B cell (primary cell): ENCODE measurements at regions of chr6 and their contacts with region 1.

Region 1: DNA sequence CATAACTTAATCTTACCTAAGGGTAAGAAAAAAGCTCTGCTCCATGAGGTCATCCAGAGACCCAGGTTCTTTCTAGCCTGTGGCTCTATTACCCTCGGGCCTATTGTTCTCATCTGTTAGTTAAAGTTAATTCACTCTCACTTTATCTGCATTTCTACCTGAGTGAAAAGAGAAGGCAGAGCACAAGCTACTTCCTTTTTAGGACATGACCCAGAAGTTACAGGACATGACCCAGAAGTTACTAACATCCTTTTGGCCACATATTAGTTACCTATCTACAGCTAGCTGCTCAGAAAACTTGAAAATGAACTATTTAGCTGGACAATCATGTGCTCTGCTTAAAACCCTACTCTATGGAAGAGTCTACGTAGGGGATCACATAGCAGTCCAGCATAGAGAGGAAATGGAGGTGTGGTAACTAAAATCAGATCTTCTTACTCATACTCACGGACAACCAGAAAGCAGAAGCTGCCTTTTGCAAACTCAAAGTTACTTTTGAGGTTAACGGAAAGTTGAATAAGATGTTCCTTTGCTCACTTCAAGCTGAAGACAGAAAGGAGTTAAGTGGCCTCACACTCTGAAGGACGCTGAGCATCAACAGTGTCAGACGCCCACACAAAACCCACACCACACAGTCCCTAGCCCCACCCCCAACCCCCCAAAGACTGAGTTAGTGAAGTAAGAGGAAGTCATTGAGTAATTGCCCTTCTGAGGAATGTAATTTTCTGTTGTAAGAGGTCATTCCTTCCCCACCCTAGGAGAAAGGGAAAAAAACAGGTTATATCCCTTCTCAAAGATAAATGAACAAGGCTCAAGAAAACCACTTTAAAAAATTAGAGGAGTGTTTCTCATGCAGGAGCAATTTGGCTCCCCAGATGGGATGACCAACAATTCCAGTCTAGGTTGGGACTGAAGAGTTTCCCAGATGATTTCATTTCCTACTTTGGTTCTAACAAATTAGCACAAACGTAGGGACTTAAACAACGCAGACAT is 45.9 kb upstream of the TAB2 start:
- DNase-seq: peak; percentile 72
- ATAC-seq: peak; percentile 86
- H3K4me3 ChIP-seq: peak overlapping the region in 4 of 5 experiments; percentile 19 to 42 (median 36)
- H3K4me3 Mint-ChIP-seq: peak overlapping the region; percentile 81
- H3K27ac ChIP-seq: peak overlapping the region; percentile 81 to 84
- H3K27ac Mint-ChIP-seq: peak overlapping the region; percentile 99
- H3K4me1 ChIP-seq: peaks cover 54 to 59% of the 10 kb centered on the region in 2 donors
- H3K4me1 Mint-ChIP-seq: peaks cover 58% of the 10 kb centered on the region
- H3K27me3 ChIP-seq: no peaks in the 10 kb centered on the region
- H3K27me3 Mint-ChIP-seq: no peaks in the 10 kb centered on the region
- CTCF ChIP-seq: no peak

Region 2: DNA sequence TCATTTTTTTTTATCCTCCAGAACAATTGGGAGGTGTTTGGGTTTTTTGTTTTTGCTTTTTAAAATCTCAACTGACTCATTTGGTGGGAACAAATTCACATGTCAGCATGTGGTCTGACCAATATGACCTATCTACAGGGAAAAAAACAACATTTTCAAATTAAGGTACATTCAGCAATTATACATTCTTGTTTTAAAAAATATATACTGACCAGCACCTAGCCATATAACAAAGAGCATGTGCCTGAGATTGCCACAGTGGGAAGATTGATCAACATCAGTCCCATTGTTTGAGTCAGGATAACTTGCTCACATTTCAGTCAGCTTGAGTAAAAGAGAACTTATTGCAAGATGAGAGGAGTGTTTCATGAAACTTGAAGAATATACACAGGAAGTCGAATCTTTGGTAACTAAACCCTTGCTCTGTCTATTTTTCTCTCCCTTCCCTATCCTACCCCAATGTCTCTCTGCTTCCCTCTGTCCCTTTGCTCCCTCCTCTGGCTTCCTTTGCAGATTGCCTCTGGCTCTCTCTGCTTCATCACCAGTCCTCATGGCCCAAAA is 117.3 kb before region 1 on chr6:
- CTCF ChIA-PET with region 1: no interaction called
- POLR2A ChIA-PET with region 1: no interaction called
- intact Hi-C with region 1: no loop called
- DNase-seq: no peak
- ATAC-seq: no peak
- H3K4me3 ChIP-seq: no peak overlapping the region
- H3K4me3 Mint-ChIP-seq: no peak overlapping the region
- H3K27ac ChIP-seq: no peak overlapping the region
- H3K27ac Mint-ChIP-seq: no peak overlapping the region
- H3K4me1 ChIP-seq: no peaks in the 10 kb centered on the region
- H3K4me1 Mint-ChIP-seq: peaks cover 5% of the 10 kb centered on the region
- H3K27me3 ChIP-seq: no peaks in the 10 kb centered on the region
- H3K27me3 Mint-ChIP-seq: no peaks in the 10 kb centered on the region
- CTCF ChIP-seq: no peak

Region 3: GRCh38 chr6:149190224-149190831 is 81.3 kb before region 1 on chr6:
- CTCF ChIA-PET with region 1: interaction called, 11 read pairs
- POLR2A ChIA-PET with region 1: no interaction called
- intact Hi-C with region 1: no loop called
- DNase-seq: peak; percentile 77
- ATAC-seq: peak; percentile 75
- H3K4me3 ChIP-seq: no peak overlapping the region
- H3K4me3 Mint-ChIP-seq: no peak overlapping the region
- H3K27ac ChIP-seq: no peak overlapping the region
- H3K27ac Mint-ChIP-seq: no peak overlapping the region
- H3K4me1 ChIP-seq: peaks cover 0 to 8% of the 10 kb centered on the region in 2 donors
- H3K4me1 Mint-ChIP-seq: peaks cover 10% of the 10 kb centered on the region
- H3K27me3 ChIP-seq: peaks cover 0 to 3% (median 0%) of the 10 kb centered on the region in 4 experiments
- H3K27me3 Mint-ChIP-seq: no peaks in the 10 kb centered on the region
- CTCF ChIP-seq: peak; percentile 77

Region 4: DNA sequence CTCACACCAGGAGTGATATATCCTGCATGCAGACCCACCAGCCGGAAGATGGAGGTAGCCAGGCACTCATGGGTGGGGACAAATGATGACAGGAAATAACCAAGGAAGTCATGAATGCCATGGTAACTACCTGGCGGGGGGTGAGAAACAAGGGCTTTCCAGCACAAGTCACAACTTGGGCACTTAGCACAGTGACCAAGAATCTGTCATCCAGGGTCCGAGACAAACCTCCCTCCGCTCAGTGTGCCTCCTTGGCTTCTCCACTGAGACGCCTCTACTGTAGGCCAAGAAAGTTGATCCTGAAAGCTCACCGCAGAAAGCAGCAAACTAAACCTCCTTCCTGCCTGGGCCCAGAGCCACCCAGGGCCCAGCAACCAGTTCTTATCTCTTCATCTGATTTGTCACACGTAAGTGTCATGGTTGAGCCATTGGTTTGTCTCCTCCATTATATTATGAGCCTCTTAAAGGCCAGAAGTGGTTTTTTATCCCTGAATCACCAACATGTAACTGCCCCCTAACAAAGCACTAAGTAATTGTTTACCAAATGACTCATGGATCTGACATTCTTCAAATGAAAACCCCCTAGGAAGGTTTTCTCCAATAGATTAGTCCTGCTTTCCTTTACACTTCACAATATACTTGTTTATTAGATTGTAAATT is 38.5 kb before region 1 on chr6:
- CTCF ChIA-PET with region 1: interaction called, 4 read pairs
- POLR2A ChIA-PET with region 1: no interaction called
- intact Hi-C with region 1: loop called (anchors 5 kb)
- DNase-seq: no peak
- ATAC-seq: no peak
- H3K4me3 ChIP-seq: no peak overlapping the region
- H3K4me3 Mint-ChIP-seq: no peak overlapping the region
- H3K27ac ChIP-seq: no peak overlapping the region
- H3K27ac Mint-ChIP-seq: no peak overlapping the region
- H3K4me1 ChIP-seq: peaks cover 27 to 41% of the 10 kb centered on the region in 2 donors
- H3K4me1 Mint-ChIP-seq: peaks cover 53% of the 10 kb centered on the region
- H3K27me3 ChIP-seq: no peaks in the 10 kb centered on the region
- H3K27me3 Mint-ChIP-seq: no peaks in the 10 kb centered on the region
- CTCF ChIP-seq: no peak

Region 5: DNA sequence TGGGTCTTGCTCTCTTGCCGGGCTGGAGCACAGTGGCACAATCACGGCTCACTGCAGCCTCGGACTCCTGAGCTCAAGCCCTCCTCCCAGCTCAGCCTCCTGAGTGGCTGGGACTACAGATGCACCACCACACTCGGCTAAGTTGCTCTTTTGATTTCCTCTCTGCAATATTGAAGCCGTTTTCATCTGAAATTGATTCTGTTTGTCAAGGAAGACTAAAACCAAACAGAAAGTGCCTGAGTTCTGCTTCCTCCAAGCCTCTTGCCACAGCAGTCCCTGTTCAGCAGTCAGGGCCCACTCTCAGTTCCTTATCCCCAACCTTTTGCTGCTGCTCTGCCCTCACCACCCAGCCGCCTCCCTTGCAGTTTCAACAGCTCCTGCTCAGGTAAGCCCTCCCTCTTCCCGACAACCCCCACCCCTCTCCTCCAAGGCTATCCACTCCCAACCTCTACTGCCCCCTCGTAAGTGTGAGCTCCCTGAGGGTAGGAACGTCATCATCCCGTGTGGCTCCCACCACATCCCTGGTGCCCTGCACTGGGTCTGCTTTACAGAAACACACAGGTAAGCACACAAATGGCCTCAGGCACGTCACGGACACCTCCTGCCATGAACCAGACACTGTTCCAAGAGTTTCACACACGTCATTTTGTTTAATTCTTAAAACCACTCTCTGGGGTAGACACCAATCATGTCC is 24.8 kb before region 1 on chr6:
- CTCF ChIA-PET with region 1: interaction called, 3 read pairs
- POLR2A ChIA-PET with region 1: interaction called, 3 read pairs
- intact Hi-C with region 1: loop called (anchors 2 kb)
- DNase-seq: peak; percentile 76
- ATAC-seq: peak; percentile 97
- H3K4me3 ChIP-seq: peak overlapping the region in 4 of 5 experiments; percentile 4 to 64 (median 42)
- H3K4me3 Mint-ChIP-seq: peak overlapping the region; percentile 79
- H3K27ac ChIP-seq: peak overlapping the region; percentile 48 to 71
- H3K27ac Mint-ChIP-seq: peak overlapping the region; percentile 89
- H3K4me1 ChIP-seq: peaks cover 32 to 33% of the 10 kb centered on the region in 2 donors
- H3K4me1 Mint-ChIP-seq: peaks cover 52% of the 10 kb centered on the region
- H3K27me3 ChIP-seq: no peaks in the 10 kb centered on the region
- H3K27me3 Mint-ChIP-seq: no peaks in the 10 kb centered on the region
- CTCF ChIP-seq: no peak

Region 6: GRCh38 chr6:149405823-149406765 is 134.4 kb after region 1 on chr6:
- CTCF ChIA-PET with region 1: no interaction called
- POLR2A ChIA-PET with region 1: no interaction called
- intact Hi-C with region 1: no loop called
- DNase-seq: no peak
- ATAC-seq: no peak
- H3K4me3 ChIP-seq: no peak overlapping the region
- H3K4me3 Mint-ChIP-seq: no peak overlapping the region
- H3K27ac ChIP-seq: no peak overlapping the region
- H3K27ac Mint-ChIP-seq: no peak overlapping the region
- H3K4me1 ChIP-seq: no peaks in the 10 kb centered on the region
- H3K4me1 Mint-ChIP-seq: peaks cover 2% of the 10 kb centered on the region
- H3K27me3 ChIP-seq: no peaks in the 10 kb centered on the region
- H3K27me3 Mint-ChIP-seq: no peaks in the 10 kb centered on the region
- CTCF ChIP-seq: no peak

Region 7: DNA sequence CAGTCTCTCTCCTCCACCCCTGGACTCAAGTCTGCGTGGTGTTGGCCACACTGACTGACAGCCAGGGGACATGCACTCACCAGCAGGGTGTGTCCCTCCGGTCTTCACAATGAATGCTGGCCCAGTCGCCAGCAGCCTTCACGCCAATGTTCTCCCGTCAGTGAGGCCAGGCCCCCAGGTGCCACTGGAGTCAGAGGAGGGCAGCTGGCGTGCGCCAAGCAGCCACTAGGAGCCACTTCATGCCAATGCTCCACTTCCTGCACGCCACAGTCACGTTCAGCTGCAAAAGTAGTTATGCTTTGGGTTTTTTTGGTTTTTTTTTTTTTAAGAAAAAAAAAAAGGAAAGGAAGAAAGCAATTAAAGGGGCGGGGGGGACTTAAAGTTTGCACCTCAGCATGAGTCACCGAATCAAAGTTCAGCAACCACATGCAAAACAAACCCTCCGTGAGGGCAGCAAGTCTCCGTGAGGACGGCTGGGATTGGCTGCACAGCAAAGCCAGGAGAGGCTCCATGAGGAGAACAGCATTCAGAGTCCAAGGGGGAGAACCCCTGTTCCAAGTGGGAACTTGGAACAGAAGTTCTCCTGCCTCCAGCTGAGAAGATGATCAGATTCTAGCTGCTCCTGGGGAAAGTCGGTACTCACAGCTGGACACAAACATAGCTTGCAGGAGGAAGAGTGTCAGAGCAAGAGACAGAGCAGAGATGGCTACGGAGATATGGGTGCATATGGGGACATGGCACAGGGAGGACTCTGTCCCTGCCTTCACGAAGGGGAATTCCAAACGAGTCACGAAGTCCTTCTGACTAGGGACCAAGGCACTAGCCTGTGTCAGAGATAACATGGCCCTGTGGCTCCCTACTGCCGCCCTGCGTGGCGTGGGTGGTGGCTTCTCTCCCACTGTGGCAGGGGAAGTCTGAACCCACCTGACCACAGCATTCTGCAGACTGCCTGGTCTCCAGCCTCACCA is 213.4 kb after region 1 on chr6 and contains the start of gene ZC3H12D:
- CTCF ChIA-PET with region 1: no interaction called
- POLR2A ChIA-PET with region 1: no interaction called
- intact Hi-C with region 1: no loop called
- DNase-seq: peak; percentile 88
- ATAC-seq: peak; percentile 54
- H3K4me3 ChIP-seq: peak within 1 kb of the TSS; percentile 55 to 77 (median 71)
- H3K4me3 Mint-ChIP-seq: peak within 1 kb of the TSS; percentile 94
- H3K27ac ChIP-seq: peak within 1 kb of the TSS; percentile 94 to 98
- H3K27ac Mint-ChIP-seq: peak within 1 kb of the TSS; percentile 99
- H3K4me1 ChIP-seq: peaks cover 78 to 91% of the 10 kb centered on the region in 2 donors
- H3K4me1 Mint-ChIP-seq: peaks cover 77% of the 10 kb centered on the region
- H3K27me3 ChIP-seq: no peaks in the 10 kb centered on the region
- H3K27me3 Mint-ChIP-seq: no peaks in the 10 kb centered on the region
- CTCF ChIP-seq: peak; percentile 70
- total RNA-seq, gene ZC3H12D: 190 and 215 TPM in 2 replicates